ENCODE measurements at regions of chr7 and their contacts with region 1.

Region 1: GRCh38 chr7:38524786-38525185 is 106.4 kb downstream of the AMPH start:
- DNase-seq: no peak
- ATAC-seq: no peak

Region 2: DNA sequence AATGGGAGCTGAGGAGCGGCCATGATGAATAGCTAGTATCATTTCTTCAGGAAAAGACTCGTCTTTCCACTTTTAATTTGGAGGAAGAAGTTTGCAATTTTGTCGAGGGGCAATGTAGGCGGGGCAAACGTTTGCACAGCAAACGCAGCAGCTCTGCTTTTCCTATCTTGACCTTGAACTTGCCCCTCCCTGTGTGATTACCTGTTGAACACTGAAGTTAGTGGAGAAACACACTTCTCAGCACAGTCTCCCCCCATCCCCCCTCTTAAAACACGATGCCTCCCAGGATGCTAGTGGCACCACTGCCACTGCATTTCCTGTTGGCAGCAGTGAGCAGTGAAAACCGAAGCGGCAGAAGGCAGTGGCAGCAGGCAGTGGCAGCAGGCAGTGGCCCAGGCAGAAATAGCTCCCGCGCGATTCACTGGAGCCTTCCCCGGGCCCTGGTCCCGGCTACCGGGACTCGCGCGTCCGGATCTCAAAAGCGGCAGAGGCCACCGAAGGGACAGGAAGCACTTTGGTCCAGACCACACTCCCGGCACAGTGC is 604.4 kb before region 1 on chr7 and contains the start of gene EPDR1:
- intact Hi-C with region 1: no loop called
- DNase-seq: peak; percentile 77
- ATAC-seq: peak; percentile 69
- total RNA-seq, gene EPDR1: 55.1 TPM

Region 3: DNA sequence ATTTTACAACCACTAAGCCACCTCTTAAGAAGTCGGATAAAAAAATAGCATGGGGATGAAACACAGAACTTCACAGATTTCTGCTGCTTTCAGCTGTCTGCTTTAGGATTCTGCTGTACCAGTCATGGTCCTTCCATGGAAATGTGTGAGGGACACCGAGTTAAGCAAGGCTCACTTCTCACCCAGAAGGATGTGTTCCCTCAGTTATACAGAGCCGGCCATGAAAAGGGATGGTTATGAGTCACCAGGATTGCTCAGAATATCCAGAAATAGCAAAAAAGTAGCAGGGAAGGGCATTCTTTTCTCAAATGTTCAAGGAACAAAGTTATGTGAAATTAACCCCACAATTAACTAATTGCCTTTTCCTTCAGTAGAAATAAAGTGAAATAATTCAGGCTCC is 18.0 kb before region 1 on chr7:
- intact Hi-C with region 1: loop called (anchors 1 kb)
- DNase-seq: no peak
- ATAC-seq: no peak

Measured in Right ventricle myocardium inferior (tissue), 1 donor.